ENCODE measurements at regions of chrX and their contacts with region 1.

Region 1: GRCh38 chrX:2967998-2968909 is 38.1 kb upstream of the ARSH start:
- DNase-seq: no peak
- H3K4me3 Mint-ChIP-seq: no peak overlapping the region
- H3K27ac Mint-ChIP-seq: no peak overlapping the region
- H3K4me1 Mint-ChIP-seq: peaks cover 11% of the 10 kb centered on the region
- H3K27me3 Mint-ChIP-seq: no peaks in the 10 kb centered on the region
- CTCF ChIP-seq: no peak

Region 2: GRCh38 chrX:3026065-3026815 is 58.0 kb after region 1 on chrX:
- CTCF ChIA-PET with region 1: no interaction called
- intact Hi-C with region 1: loop called (anchors 10 kb)
- DNase-seq: peak; percentile 34
- H3K4me3 Mint-ChIP-seq: peak overlapping the region; percentile 41
- H3K27ac Mint-ChIP-seq: peak overlapping the region; percentile 70
- H3K4me1 Mint-ChIP-seq: no peaks in the 10 kb centered on the region
- H3K27me3 Mint-ChIP-seq: no peaks in the 10 kb centered on the region
- CTCF ChIP-seq: no peak

Measured in Calu3 (cell line).